ENCODE measurements at regions of chr20 and their contacts with region 1.

Region 1: GRCh38 chr20:19583532-19584175 is 174.4 kb upstream of the RIN2 start:
- DNase-seq: peak; percentile 44 to 79 (median 65)
- ATAC-seq: peak in 3 of 4 donors; percentile 81 to 86 (median 85)
- H3K4me3 ChIP-seq: no peak overlapping the region
- H3K27ac ChIP-seq: no peak overlapping the region
- H3K4me1 ChIP-seq: no peaks in the 10 kb centered on the region
- H3K27me3 ChIP-seq: peaks cover 0 to 6% (median 0%) of the 10 kb centered on the region in 9 donors
- CTCF ChIP-seq: peak; percentile 70 to 85 (median 79)
- POLR2A ChIP-seq: no peak

Region 2: DNA sequence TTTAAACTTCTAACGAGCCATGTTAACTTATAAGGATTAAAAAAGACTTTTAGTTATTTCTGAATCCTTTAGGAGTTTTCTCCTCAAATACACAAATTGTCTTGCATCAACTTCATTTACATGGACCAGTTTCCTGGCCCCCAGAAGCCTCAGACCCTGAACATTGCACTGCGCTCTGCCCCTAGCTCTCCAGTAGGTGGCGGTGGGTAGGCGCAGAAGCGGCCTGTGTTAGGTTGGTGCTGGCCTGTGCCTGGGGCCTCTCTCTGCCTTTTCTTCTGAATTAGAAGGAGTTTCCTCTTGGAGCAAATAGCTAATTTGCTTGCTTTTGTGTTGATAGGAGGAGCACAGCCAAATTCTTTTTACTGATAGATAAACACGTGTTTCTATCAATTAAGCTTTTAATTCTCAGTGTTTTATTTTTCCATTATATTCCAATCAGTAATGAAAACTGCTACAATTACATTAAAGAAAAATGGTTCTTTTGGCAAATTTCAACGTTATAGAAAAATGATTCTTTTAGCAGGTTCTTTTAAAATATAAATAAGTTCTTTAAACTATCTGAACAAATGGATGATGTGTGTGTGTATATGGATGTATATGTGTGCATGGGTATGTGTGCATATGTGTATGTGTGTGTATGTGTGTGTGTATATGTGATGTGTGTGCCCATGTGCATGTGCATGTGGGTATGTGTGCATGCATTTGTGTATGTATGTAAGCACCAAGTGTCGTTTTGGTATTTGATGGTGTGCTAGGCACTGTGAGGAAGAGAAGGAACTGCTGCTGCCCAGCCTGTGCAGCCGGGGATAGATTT is 951.3 kb before region 1 on chr20:
- intact Hi-C with region 1: loop called in 4 of 10 experiments (anchors 5 to 10 kb)
- DNase-seq: peak; percentile 56 to 70 (median 61)
- ATAC-seq: peak; percentile 88 to 94 (median 89)
- H3K4me3 ChIP-seq: no peak overlapping the region
- H3K27ac ChIP-seq: no peak overlapping the region
- H3K4me1 ChIP-seq: peaks cover 0 to 5% (median 0%) of the 10 kb centered on the region in 12 donors
- H3K27me3 ChIP-seq: no peaks in the 10 kb centered on the region
- CTCF ChIP-seq: peak; percentile 77 to 96 (median 86)
- POLR2A ChIP-seq: no peak

Region 3: GRCh38 chr20:18916886-18917750 is 666.5 kb before region 1 on chr20:
- intact Hi-C with region 1: loop called in 1 of 10 experiments (anchors 10 kb)
- DNase-seq: no peak
- ATAC-seq: no peak
- H3K4me3 ChIP-seq: no peak overlapping the region
- H3K27ac ChIP-seq: no peak overlapping the region
- H3K4me1 ChIP-seq: no peaks in the 10 kb centered on the region
- H3K27me3 ChIP-seq: no peaks in the 10 kb centered on the region
- CTCF ChIP-seq: no peak
- POLR2A ChIP-seq: no peak

Region 4: GRCh38 chr20:19376451-19377229 is 207.0 kb before region 1 on chr20:
- intact Hi-C with region 1: loop called in 1 of 10 experiments (anchors 10 kb)
- DNase-seq: peak in 1 of 5 donors; percentile 41
- ATAC-seq: peak; percentile 56 to 88 (median 86)
- H3K4me3 ChIP-seq: peak overlapping the region in 6 of 12 donors; percentile 7 to 45 (median 22)
- H3K27ac ChIP-seq: peak overlapping the region in 1 of 12 donors; percentile 15
- H3K4me1 ChIP-seq: peaks cover 0 to 9% (median 0%) of the 10 kb centered on the region in 12 donors
- H3K27me3 ChIP-seq: no peaks in the 10 kb centered on the region
- CTCF ChIP-seq: no peak
- POLR2A ChIP-seq: no peak